Tibial artery (tissue), 4 donors: ENCODE measurements at regions of chr3 and their contacts with region 1.

Region 1: DNA sequence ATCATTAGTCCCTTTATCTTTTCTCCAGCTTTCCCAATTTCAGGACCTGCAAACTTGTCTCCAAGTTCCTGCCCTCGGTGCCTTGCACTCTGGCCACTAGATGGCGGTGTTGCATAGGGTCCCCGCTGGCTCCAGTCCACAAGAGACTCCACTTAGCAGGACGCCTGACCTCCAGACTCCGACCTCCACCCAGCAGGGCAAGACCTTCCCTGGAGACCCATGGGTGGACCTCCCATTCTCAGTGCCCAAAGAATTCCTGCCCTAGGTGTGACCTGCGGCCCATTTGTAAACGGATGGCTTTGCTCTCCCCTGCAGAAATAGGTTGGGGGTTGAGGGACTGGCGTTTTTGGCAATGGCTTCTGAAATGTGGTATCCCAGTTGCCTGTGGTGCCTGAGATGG is 82.6 kb downstream of the LSM3 start:
- DNase-seq: peak; percentile 70 to 87
- H3K4me3 ChIP-seq: no peak overlapping the region
- H3K27ac ChIP-seq: no peak overlapping the region
- H3K4me1 ChIP-seq: peaks cover 0 to 3% (median 0%) of the 10 kb centered on the region in 4 donors
- H3K27me3 ChIP-seq: peaks cover 0 to 9% of the 10 kb centered on the region in 2 donors
- CTCF ChIP-seq: peak; percentile 89 to 96

Region 2: DNA sequence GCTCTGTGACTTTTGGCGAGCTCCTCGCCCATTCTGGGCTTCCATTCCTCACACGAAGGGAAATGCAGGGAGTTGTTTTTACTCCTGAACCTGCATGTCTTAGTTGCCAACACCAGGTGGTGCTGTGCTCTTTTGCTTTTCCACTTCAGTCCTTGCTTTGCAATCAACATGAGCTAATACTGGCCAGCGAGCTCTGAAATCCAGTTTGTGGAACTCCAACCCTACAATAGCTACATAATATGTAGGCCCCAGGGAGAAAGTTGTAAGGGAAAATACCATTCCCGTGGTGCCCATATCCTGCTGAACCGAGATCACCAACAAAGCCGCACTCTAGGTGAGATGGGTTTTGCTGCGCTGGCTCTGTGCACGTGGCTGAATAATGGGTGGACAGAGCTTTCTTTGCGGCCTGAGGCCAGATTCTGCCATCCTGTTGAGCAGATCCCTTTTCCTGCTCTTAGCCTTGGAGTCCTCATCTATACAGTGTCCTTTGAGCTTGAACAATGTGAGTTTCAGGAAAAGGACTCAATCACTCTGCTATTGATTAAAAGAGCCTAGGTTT is 57.6 kb before region 1 on chr3:
- intact Hi-C with region 1: loop called (anchors 10 kb)
- DNase-seq: peak; percentile 51 to 77
- H3K4me3 ChIP-seq: no peak overlapping the region
- H3K27ac ChIP-seq: no peak overlapping the region
- H3K4me1 ChIP-seq: peaks cover 0 to 23% (median 14%) of the 10 kb centered on the region in 4 donors
- H3K27me3 ChIP-seq: no peaks in the 10 kb centered on the region
- CTCF ChIP-seq: peak; percentile 78 to 81

Region 3: DNA sequence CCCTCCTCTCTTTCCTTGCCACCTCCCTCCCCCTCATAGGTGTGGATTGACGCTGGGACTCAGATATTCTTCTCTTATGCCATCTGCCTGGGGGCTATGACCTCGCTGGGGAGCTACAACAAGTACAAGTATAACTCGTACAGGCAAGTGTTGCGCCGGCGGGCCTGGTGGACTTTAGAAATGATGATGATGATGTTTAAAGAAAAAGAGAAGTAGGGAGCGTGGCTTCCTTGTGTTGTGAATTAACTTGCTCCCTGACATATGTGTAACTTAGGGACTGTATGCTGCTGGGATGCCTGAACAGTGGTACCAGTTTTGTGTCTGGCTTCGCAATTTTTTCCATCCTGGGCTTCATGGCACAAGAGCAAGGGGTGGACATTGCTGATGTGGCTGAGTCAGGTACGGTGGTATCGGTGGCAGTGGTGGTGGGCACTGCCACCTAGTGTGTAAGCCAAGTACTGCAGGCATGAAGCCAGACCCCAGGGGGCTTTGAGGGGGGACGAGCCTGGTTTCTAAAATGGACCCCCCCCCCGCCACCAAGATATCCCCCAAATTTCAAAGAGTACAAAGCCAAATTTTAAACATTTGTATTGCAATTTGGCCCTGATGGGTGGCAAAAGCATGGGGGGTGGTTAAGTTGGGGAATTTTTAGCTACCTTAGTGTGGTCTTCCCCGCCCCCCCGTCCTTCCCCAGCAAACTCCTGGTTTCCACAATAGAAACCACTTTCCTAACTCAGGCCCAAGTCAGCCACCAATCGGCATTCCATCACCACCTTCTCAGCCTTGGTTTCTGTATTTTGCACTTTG is 206.8 kb after region 1 on chr3:
- intact Hi-C with region 1: loop called (anchors 2 kb)
- DNase-seq: no peak
- H3K4me3 ChIP-seq: no peak overlapping the region
- H3K27ac ChIP-seq: no peak overlapping the region
- H3K4me1 ChIP-seq: peaks cover 0 to 7% (median 0%) of the 10 kb centered on the region in 4 donors
- H3K27me3 ChIP-seq: no peaks in the 10 kb centered on the region
- CTCF ChIP-seq: peak; percentile 93 to 97

Region 4: DNA sequence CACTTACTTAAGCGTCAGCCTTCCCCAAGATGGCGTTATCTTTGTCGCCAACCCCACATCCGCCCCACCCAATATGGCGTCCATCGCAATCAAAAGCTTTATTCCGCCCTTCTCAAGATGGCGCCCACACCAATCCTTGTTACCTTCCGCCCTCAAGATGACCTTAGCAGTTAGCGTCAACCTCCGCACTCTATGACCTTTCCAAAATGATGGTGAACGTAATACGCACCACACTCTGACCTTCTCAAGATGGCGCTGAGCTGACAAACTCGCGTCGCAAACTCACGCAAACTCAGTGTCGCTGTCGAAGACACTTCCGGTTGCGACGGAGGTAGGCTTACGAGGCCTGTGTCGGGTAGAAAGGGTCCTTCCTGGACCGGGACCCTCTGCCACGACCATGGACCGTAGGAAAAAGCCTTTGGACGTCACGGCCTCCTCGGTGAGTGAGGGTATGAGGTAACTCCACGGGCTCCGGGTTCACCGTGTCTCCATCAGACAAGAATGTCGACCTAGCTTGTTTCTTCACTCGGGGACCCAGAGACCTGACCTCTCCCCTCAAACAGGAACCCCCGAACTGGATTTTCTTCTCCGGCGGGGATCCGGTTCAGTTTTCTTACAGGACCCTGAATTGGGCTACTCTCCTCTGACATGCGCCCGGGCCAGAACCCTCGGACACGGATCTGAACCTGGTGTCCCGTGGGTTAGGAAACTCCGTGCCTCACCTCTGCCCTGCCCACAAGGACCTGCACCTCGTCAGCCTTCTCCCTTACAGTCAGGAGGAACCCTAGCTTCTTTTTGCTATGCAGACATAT is 390.4 kb after region 1 on chr3 and contains the start of gene CCDC174:
- intact Hi-C with region 1: loop called (anchors 10 kb)
- DNase-seq: peak; percentile 96 to 98
- H3K4me3 ChIP-seq: peak within 1 kb of the TSS; percentile 64 to 85
- H3K27ac ChIP-seq: peak within 1 kb of the TSS; percentile 85 to 94
- H3K4me1 ChIP-seq: peaks cover 0 to 28% (median 19%) of the 10 kb centered on the region in 4 donors
- H3K27me3 ChIP-seq: no peaks in the 10 kb centered on the region
- CTCF ChIP-seq: no peak